Activated T-helper 1 cell treated with anti-CD3 and anti-CD28 coated beads, Interleukin-12 subunit alpha, Interleukin-12 subunit beta, Interleukin-2, Interleukin-4 antibody, amounts not matched to agents 30 ng/mL and 10 ng/mL and 1 ng/mL, durations not matched to agents 14 hours and 24 hours and 36 hours (primary cell): ENCODE measurements at regions of chr13 and their contacts with region 1.

Region 1: DNA sequence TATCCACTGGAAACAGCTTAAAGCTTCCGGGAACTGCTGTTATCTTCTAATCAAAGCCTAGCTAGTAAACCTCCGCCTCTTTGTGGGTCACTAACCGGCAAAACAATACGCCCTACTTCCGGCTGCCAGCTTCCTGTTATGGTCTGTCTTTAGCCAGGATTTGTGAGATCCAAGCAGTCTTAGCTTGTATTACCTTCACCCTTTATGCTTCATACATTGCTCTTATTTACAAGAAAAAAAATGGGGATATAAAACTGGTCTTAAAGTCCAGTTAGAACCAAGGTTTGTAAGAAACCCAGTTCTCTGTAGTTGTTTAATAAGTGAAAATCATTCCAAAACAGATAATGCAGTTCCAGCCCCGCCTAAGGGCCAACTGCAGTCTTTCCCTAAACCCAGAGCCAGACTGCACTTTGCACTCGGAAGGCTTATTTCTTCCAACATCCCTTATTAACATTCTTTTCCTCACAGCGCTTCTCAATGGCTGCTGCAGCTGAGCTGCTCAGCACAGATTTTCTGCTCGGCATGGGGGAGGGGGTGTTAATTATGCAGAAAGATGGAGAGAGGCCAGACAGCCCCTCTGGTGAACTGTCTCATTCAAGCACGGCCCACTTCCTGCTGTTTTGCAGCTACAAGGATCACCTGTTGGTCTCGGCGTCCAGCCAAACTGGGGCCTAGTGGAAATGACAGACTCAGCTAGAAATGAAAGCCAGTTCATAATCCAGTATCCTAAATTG is 368.4 kb downstream of the KLF12 start:
- DNase-seq: peak; percentile 43
- H3K4me3 Mint-ChIP-seq: peak overlapping the region; percentile 69
- H3K27ac Mint-ChIP-seq: peak overlapping the region; percentile 83
- H3K4me1 Mint-ChIP-seq: peaks cover 46% of the 10 kb centered on the region
- H3K27me3 Mint-ChIP-seq: no peaks in the 10 kb centered on the region

Region 2: GRCh38 chr13:73835138-73835721 is 69.4 kb after region 1 on chr13:
- intact Hi-C with region 1: loop called (anchors 5 kb)
- DNase-seq: no peak
- H3K4me3 Mint-ChIP-seq: no peak overlapping the region
- H3K27ac Mint-ChIP-seq: no peak overlapping the region
- H3K4me1 Mint-ChIP-seq: peaks cover 5% of the 10 kb centered on the region
- H3K27me3 Mint-ChIP-seq: no peaks in the 10 kb centered on the region

Region 3: DNA sequence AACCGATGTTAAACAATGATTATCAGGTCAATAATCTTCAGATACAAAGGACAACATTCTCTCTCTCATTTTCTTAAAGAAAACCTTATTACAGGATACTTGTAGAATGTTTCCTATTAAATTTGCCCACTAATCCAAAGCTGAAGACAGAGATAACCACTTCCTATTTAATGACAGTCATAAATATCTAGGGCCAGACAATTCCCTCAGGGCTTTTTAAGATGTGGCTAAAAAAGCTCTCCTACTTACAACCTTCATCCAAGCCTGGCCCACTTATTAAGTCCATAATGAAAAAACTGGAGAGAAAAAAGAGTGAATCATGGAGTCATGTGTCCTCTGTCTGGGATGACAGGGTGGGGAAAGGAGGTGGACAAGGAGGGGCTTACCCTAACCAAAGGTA is 132.5 kb after region 1 on chr13:
- intact Hi-C with region 1: no loop called
- DNase-seq: no peak
- H3K4me3 Mint-ChIP-seq: no peak overlapping the region
- H3K27ac Mint-ChIP-seq: no peak overlapping the region
- H3K4me1 Mint-ChIP-seq: peaks cover 8% of the 10 kb centered on the region
- H3K27me3 Mint-ChIP-seq: no peaks in the 10 kb centered on the region

Region 4: GRCh38 chr13:74230984-74231501 is 465.2 kb after region 1 on chr13:
- intact Hi-C with region 1: loop called (anchors 5 kb)
- DNase-seq: no peak
- H3K4me3 Mint-ChIP-seq: peak overlapping the region; percentile 31
- H3K27ac Mint-ChIP-seq: peak overlapping the region; percentile 45
- H3K4me1 Mint-ChIP-seq: peaks cover 21% of the 10 kb centered on the region
- H3K27me3 Mint-ChIP-seq: no peaks in the 10 kb centered on the region